ENCODE measurements at regions of chr9 and their contacts with region 1.

Region 1: GRCh38 chr9:91361291-91362050 is at the start of gene AUH:
- DNase-seq: peak; percentile 38 to 89
- H3K4me3 ChIP-seq: peak within 1 kb of the TSS; percentile 89 to 96
- H3K27ac ChIP-seq: peak within 1 kb of the TSS; percentile 86 to 88
- H3K4me1 ChIP-seq: peaks cover 0 to 7% of the 10 kb centered on the region in 2 donors
- H3K27me3 ChIP-seq: no peaks in the 10 kb centered on the region
- CTCF ChIP-seq: no peak
- total RNA-seq, gene AUH: 46.2 TPM

Region 2: GRCh38 chr9:90921111-90921510 is 440.4 kb before region 1 on chr9:
- intact Hi-C with region 1: loop called (anchors 2 kb)
- DNase-seq: peak; percentile 70 to 95
- H3K4me3 ChIP-seq: no peak overlapping the region
- H3K27ac ChIP-seq: peak overlapping the region; percentile 77 to 80
- H3K4me1 ChIP-seq: peaks cover 6 to 25% of the 10 kb centered on the region in 2 donors
- H3K27me3 ChIP-seq: no peaks in the 10 kb centered on the region
- CTCF ChIP-seq: no peak

Region 3: GRCh38 chr9:91101611-91102168 is 259.8 kb before region 1 on chr9:
- intact Hi-C with region 1: loop called (anchors 5 kb)
- DNase-seq: no peak
- H3K4me3 ChIP-seq: no peak overlapping the region
- H3K27ac ChIP-seq: peak overlapping the region; percentile 82 to 85
- H3K4me1 ChIP-seq: peaks cover 8 to 17% of the 10 kb centered on the region in 2 donors
- H3K27me3 ChIP-seq: no peaks in the 10 kb centered on the region
- CTCF ChIP-seq: no peak

Region 4: DNA sequence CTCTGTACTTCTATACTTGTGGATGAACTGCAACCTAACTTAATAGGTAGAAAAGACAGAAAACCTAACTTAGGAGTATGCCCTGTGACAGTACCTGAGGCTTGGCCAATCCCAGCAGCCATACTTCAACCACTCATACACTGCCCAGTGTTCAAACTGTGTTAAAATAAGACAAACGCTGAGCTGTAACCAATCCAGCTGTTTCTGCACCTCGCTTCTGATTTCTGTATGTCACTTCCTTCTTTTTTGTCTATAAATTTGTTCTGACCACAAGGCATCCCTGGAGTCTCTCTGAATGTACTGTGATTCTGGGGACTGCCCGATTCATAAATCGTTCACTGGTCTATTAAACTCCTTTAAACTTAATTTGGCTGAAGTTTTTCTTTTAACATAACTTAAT is 41.2 kb before region 1 on chr9:
- intact Hi-C with region 1: no loop called
- DNase-seq: no peak
- H3K4me3 ChIP-seq: no peak overlapping the region
- H3K27ac ChIP-seq: no peak overlapping the region
- H3K4me1 ChIP-seq: no peaks in the 10 kb centered on the region
- H3K27me3 ChIP-seq: no peaks in the 10 kb centered on the region
- CTCF ChIP-seq: no peak

Measured in ascending aorta (tissue), 2 donors.